Ascending aorta (tissue), 2 donors: ENCODE measurements at regions of chr10 and their contacts with region 1.

Region 1: DNA sequence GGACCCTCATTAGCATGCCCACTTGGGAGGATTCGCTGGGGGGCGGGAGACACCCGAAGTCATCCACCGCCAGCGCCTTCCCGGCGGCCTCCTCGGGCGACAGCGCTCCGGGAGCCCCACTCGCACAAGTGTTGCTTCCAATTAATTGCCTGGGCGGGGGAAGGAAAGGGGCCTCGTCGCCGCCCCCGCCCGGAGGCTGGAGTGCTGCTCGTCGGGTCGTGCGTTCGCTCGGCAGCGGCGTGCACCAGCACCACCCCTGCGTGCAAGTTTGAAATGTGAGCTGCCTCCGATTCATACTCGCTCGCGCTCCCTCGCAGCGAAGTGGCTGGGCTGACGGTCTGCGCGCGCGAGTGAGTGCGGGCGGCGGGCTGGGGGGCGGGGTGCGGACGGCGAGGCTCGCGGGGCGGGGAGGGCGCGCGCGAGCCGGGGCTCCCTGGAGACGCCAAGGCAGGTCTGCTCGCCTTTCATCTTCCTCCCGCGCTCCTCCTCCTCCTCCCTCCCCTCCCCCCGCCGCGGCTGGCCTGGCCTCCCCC is 104.6 kb upstream of the PPIF start:
- DNase-seq: peak in 1 of 2 donors; percentile 80
- H3K4me3 ChIP-seq: peak overlapping the region; percentile 81 to 82
- H3K27ac ChIP-seq: peak overlapping the region; percentile 66 to 96
- H3K4me1 ChIP-seq: peaks cover 28 to 52% of the 10 kb centered on the region in 2 donors
- H3K27me3 ChIP-seq: no peaks in the 10 kb centered on the region
- CTCF ChIP-seq: no peak

Region 2: DNA sequence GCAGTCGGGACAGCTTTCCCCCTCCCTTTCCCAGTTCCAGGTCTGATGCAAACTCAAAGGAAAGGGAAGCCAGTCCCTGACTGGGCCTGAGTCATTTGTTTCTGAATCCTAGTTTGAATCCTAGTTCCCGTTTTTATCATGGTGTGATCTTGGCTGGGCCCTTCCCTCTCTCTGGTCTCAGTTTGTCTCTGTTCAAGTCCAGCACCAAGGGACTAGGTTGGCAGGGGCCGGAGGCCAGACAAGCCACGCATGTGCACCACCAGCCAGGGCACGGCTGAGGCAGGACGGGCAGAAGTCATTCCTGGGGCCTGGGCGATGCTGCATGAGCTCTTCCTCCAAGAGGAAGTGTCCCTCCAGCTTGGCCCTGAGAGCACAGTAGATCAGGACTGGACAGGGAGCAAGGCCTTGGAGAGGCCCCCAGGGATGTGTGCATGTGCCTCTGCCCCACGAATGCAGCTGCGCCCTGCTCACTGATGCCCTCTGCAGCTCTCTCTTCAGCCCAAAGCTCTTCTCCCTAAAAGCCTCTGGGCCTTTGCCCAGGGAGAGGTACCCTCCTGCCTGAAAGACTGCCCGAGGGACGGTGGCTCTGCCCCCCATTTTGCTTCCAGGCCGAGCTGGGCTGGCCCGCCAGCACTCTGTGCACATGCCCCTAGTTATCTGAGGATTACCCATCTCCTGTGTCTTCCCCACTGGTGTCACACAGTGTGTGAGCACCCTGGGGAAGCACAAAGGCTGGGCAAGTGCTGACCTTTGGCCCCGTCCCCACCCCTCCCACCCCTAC is 87.2 kb before region 1 on chr10:
- intact Hi-C with region 1: loop called (anchors 5 kb)
- DNase-seq: peak in 1 of 2 donors; percentile 84
- H3K4me3 ChIP-seq: no peak overlapping the region
- H3K27ac ChIP-seq: peak overlapping the region; percentile 87 to 88
- H3K4me1 ChIP-seq: peaks cover 56 to 100% of the 10 kb centered on the region in 2 donors
- H3K27me3 ChIP-seq: no peaks in the 10 kb centered on the region
- CTCF ChIP-seq: peak in 1 of 3 experiments; percentile 24

Region 3: GRCh38 chr10:79266543-79267312 is 24.0 kb after region 1 on chr10:
- intact Hi-C with region 1: loop called (anchors 1 kb)
- DNase-seq: peak; percentile 86 to 96
- H3K4me3 ChIP-seq: peak overlapping the region in 1 of 2 donors; percentile 7
- H3K27ac ChIP-seq: peak overlapping the region; percentile 92 to 95
- H3K4me1 ChIP-seq: peaks cover 28 to 40% of the 10 kb centered on the region in 2 donors
- H3K27me3 ChIP-seq: no peaks in the 10 kb centered on the region
- CTCF ChIP-seq: no peak

Region 4: DNA sequence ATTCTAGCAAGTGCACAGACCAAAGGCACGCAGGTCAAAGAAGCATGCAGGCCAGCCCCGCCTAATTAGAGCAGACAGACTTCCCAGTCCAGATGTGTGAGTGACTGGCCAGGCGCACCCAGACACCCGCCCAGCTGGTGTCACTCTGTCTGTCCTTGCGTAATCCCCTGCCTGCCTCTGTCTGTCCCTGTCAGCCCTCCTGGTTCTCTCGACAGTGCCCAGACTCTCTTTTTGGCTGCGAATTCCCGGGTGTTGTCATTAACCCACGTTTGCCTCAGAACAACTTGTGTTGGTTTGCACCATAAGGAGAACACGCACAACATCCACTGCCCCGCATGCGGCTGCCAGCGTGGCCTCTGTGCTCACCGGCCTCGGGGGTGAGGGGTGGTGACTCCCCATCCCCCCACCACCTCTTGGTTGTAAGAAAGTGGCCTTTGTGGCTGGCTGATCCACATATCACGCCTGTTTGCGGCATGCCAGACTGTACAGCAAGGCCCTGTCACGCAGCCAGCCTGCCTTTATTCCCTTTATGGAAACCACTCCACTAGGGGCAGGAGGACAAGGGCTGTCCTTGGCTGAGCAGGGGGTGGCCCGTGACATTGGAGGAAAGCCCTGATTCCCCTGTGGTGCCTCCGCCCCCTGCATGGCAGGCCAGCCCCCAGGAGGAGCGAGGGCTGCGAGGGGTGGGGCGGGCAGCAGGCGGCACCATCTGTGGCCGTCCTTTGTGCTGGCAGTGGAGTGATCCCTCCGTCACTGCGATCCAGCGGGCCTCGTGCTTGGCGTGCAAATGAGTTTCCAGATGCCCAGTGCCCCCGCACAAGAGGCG is 31.8 kb after region 1 on chr10:
- intact Hi-C with region 1: loop called (anchors 1 kb)
- DNase-seq: peak; percentile 63 to 90
- H3K4me3 ChIP-seq: peak overlapping the region in 1 of 2 donors; percentile 21
- H3K27ac ChIP-seq: peak overlapping the region; percentile 64 to 78
- H3K4me1 ChIP-seq: peaks cover 18 to 26% of the 10 kb centered on the region in 2 donors
- H3K27me3 ChIP-seq: no peaks in the 10 kb centered on the region
- CTCF ChIP-seq: peak in 2 of 3 experiments; percentile 22 to 42

Region 5: GRCh38 chr10:79298403-79299244 is 55.9 kb after region 1 on chr10:
- intact Hi-C with region 1: loop called (anchors 2 kb)
- DNase-seq: peak in 1 of 2 donors; percentile 86
- H3K4me3 ChIP-seq: no peak overlapping the region
- H3K27ac ChIP-seq: peak overlapping the region; percentile 20 to 70
- H3K4me1 ChIP-seq: peaks cover 3 to 14% of the 10 kb centered on the region in 2 donors
- H3K27me3 ChIP-seq: no peaks in the 10 kb centered on the region
- CTCF ChIP-seq: no peak

Region 6: DNA sequence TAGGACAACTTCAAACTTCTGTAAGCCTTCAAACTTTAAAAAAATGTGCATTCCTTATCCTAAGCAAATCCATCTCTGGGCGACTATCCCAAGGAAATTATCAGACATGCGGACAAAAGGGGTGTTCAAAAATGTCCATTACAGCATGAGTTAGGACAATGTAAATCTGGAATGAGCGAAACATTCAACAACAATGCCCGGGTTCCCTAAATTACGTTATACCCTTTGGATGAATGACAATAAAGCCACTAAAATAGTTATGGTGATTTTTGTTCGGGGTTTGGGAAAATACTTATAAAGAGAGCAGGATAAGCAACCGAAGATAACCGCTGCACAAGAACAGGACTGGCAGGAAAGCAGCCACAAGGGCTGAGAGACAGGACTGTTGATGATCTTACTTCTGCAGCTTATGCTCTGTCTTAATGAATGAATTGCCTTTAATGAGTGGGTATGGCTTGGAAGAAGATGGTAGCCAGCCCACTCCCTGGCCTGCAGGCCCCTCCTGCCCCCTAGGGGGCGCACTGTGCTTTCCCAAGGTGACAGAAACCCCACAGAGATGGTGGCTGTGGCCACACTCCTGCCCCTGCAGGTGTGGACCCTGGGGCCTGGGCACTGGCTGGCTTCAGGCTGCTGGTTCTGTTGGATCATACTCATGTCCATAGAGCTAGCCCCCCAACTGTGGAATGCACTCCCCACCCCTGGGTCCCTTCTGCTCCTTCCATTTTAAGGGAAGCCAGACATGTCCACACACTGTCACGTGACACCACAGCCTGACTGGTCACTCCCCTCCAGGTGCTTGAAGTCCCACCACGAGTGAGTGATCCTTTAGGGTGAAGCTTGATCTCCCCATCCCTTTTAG is 157.7 kb after region 1 on chr10:
- intact Hi-C with region 1: loop called (anchors 1 kb)
- DNase-seq: no peak
- H3K4me3 ChIP-seq: peak overlapping the region in 1 of 2 donors; percentile 6
- H3K27ac ChIP-seq: peak overlapping the region; percentile 87 to 88
- H3K4me1 ChIP-seq: peaks cover 42 to 82% of the 10 kb centered on the region in 2 donors
- H3K27me3 ChIP-seq: no peaks in the 10 kb centered on the region
- CTCF ChIP-seq: peak in 2 of 3 experiments; percentile 37 to 54

Region 7: GRCh38 chr10:79422178-79422892 is 179.6 kb after region 1 on chr10:
- intact Hi-C with region 1: no loop called
- DNase-seq: peak in 1 of 2 donors; percentile 86
- H3K4me3 ChIP-seq: peak overlapping the region in 1 of 2 donors; percentile 39
- H3K27ac ChIP-seq: peak overlapping the region; percentile 83 to 88
- H3K4me1 ChIP-seq: peaks cover 15 to 46% of the 10 kb centered on the region in 2 donors
- H3K27me3 ChIP-seq: no peaks in the 10 kb centered on the region
- CTCF ChIP-seq: no peak